Activated CD8-positive, alpha-beta T cell treated with anti-CD3 and anti-CD28 coated beads for 36 hours (primary cell): ENCODE measurements at regions of chr11 and their contacts with region 1.

Region 1: GRCh38 chr11:61446211-61446651 is 16.3 kb downstream of the SDHAF2 start:
- DNase-seq: peak; percentile 92
- ATAC-seq: peak; percentile 92
- H3K4me3 Mint-ChIP-seq: no peak overlapping the region
- H3K27ac Mint-ChIP-seq: peak overlapping the region; percentile 54
- H3K4me1 Mint-ChIP-seq: peaks cover 32% of the 10 kb centered on the region
- H3K27me3 Mint-ChIP-seq: no peaks in the 10 kb centered on the region
- CTCF ChIP-seq: peak; percentile 75

Region 2: GRCh38 chr11:61403658-61404057 is 42.6 kb before region 1 on chr11:
- CTCF ChIA-PET with region 1: interaction called, 14 read pairs
- POLR2A ChIA-PET with region 1: no interaction called
- intact Hi-C with region 1: no loop called
- DNase-seq: no peak
- ATAC-seq: no peak
- H3K4me3 Mint-ChIP-seq: no peak overlapping the region
- H3K27ac Mint-ChIP-seq: no peak overlapping the region
- H3K4me1 Mint-ChIP-seq: peaks cover 1% of the 10 kb centered on the region
- H3K27me3 Mint-ChIP-seq: no peaks in the 10 kb centered on the region
- CTCF ChIP-seq: no peak

Region 3: GRCh38 chr11:61429691-61430582 is 16.3 kb before region 1 on chr11 and contains the starts of genes CPSF7 and SDHAF2:
- CTCF ChIA-PET with region 1: interaction called, 158 read pairs
- POLR2A ChIA-PET with region 1: interaction called, 18 read pairs
- intact Hi-C with region 1: no loop called
- DNase-seq: peak; percentile 98
- ATAC-seq: peak; percentile 91
- H3K4me3 Mint-ChIP-seq: peak within 1 kb of the TSS; percentile 98
- H3K27ac Mint-ChIP-seq: peak within 1 kb of the TSS; percentile 99
- H3K4me1 Mint-ChIP-seq: peaks cover 57% of the 10 kb centered on the region
- H3K27me3 Mint-ChIP-seq: no peaks in the 10 kb centered on the region
- CTCF ChIP-seq: no peak
- total RNA-seq, gene CPSF7: 98.5 to 105 TPM
- total RNA-seq, gene SDHAF2: 33.6 to 35.3 TPM

Region 4: GRCh38 chr11:61460474-61460881 is 14.2 kb after region 1 on chr11:
- CTCF ChIA-PET with region 1: interaction called, 20 read pairs
- POLR2A ChIA-PET with region 1: no interaction called
- intact Hi-C with region 1: no loop called
- DNase-seq: no peak
- ATAC-seq: no peak
- H3K4me3 Mint-ChIP-seq: no peak overlapping the region
- H3K27ac Mint-ChIP-seq: no peak overlapping the region
- H3K4me1 Mint-ChIP-seq: no peaks in the 10 kb centered on the region
- H3K27me3 Mint-ChIP-seq: no peaks in the 10 kb centered on the region
- CTCF ChIP-seq: no peak

Region 5: DNA sequence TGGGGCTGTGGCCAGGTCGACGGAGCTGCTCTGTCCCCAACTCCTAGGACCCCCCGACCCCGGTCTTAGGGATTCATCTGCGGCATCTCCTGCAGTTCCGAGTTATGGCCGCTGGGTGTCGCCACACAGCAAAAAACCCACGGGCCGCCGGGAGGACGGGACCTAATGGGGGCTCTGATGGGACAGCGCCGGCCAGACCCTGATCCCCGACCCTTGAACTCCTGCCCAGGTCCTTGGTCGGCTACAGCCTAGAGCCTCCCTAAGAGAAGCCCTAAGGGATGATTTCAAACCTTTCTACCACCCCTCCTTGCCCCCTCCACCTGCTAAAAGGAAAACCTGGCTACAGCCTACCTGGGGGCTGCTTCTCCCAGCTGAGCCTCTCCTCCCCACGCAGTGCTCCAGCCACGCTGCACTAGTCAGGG is 31.5 kb after region 1 on chr11:
- CTCF ChIA-PET with region 1: interaction called, 22 read pairs
- POLR2A ChIA-PET with region 1: no interaction called
- intact Hi-C with region 1: no loop called
- DNase-seq: peak; percentile 70
- ATAC-seq: peak; percentile 64
- H3K4me3 Mint-ChIP-seq: no peak overlapping the region
- H3K27ac Mint-ChIP-seq: no peak overlapping the region
- H3K4me1 Mint-ChIP-seq: peaks cover 15% of the 10 kb centered on the region
- H3K27me3 Mint-ChIP-seq: peaks cover 2% of the 10 kb centered on the region
- CTCF ChIP-seq: peak; percentile 94

Region 6: GRCh38 chr11:61509043-61510029 is 63.1 kb after region 1 on chr11:
- CTCF ChIA-PET with region 1: interaction called, 18 read pairs
- POLR2A ChIA-PET with region 1: no interaction called
- intact Hi-C with region 1: no loop called
- DNase-seq: peak; percentile 80
- ATAC-seq: peak; percentile 88
- H3K4me3 Mint-ChIP-seq: peak overlapping the region; percentile 17
- H3K27ac Mint-ChIP-seq: no peak overlapping the region
- H3K4me1 Mint-ChIP-seq: no peaks in the 10 kb centered on the region
- H3K27me3 Mint-ChIP-seq: peaks cover 42% of the 10 kb centered on the region
- CTCF ChIP-seq: peak; percentile 50

Region 7: GRCh38 chr11:61516675-61517572 is 70.7 kb after region 1 on chr11:
- CTCF ChIA-PET with region 1: interaction called, 51 read pairs
- POLR2A ChIA-PET with region 1: interaction called, 3 read pairs
- intact Hi-C with region 1: no loop called
- DNase-seq: peak; percentile 74
- ATAC-seq: peak; percentile 88
- H3K4me3 Mint-ChIP-seq: peak overlapping the region; percentile 1
- H3K27ac Mint-ChIP-seq: no peak overlapping the region
- H3K4me1 Mint-ChIP-seq: peaks cover 6% of the 10 kb centered on the region
- H3K27me3 Mint-ChIP-seq: peaks cover 8% of the 10 kb centered on the region
- CTCF ChIP-seq: peak; percentile 99

Region 8: DNA sequence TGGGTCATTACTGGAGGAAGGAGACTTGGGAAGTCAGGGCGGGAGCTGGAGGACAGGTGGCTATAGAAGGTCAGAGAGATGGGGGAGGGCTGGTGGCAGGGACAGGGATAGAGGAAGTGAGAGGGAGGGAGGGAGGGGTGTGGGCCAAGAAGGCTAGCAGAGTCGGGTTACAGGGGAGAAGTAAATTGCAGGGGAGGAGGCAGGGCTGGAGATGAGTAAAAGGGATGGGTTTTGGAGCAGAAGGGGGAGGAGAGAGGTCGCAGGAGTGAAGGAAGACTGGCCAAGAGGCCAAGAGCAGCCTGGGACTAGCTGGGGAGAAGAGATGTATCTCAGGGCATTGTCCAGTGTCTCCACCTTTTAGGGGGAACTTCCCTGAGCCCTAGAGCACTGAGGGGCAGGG is 95.4 kb after region 1 on chr11:
- CTCF ChIA-PET with region 1: no interaction called
- POLR2A ChIA-PET with region 1: no interaction called
- intact Hi-C with region 1: no loop called
- DNase-seq: no peak
- ATAC-seq: no peak
- H3K4me3 Mint-ChIP-seq: no peak overlapping the region
- H3K27ac Mint-ChIP-seq: no peak overlapping the region
- H3K4me1 Mint-ChIP-seq: no peaks in the 10 kb centered on the region
- H3K27me3 Mint-ChIP-seq: peaks cover 19% of the 10 kb centered on the region
- CTCF ChIP-seq: no peak